Heart right ventricle (tissue), 16 donors: ENCODE measurements at regions of chr6 and their contacts with region 1.

Region 1: DNA sequence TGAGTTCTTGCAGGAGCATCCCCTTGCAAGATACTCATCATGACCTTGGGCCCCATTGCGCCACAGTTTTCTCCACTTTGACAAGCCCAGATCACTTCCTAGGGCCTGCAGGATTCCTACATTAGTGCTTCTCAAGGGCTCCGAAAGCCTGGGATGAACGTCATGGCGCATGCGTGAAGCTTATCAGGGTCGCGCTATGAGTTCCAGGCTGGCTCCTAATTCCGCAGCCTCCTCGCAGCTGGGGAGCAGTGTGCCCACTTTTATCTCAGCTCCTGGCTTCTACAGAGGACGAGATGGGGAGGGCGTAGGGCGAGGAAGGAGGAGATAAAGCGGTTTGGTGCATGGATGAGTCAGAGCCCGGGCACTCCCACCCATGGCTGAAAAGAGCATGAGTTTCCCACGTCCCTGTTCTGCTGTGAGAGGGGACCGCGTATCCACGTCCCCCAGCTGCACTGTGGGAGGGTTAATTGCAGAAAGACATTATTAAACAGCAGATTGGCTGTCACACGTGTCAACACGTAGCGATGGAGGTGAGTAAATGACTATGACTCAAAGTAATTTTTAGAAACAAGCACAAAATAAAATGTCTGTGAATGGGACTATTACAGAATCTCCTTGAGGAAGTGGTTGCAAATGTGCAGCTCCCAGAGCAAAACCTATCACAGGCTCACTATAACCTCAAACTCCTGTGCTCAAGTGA is 72.9 kb upstream of the DSP start:
- DNase-seq: peak; percentile 66 to 67
- ATAC-seq: peak; percentile 78 to 97 (median 93)
- H3K4me3 ChIP-seq: peak overlapping the region in 9 of 10 donors; percentile 9 to 50 (median 38)
- H3K27ac ChIP-seq: peak overlapping the region in 9 of 10 donors; percentile 48 to 76 (median 71)
- H3K4me1 ChIP-seq: peaks cover 0 to 33% (median 18%) of the 10 kb centered on the region in 9 donors
- H3K27me3 ChIP-seq: no peaks in the 10 kb centered on the region
- CTCF ChIP-seq: peak in 2 of 9 donors; percentile 27 to 29

Region 2: DNA sequence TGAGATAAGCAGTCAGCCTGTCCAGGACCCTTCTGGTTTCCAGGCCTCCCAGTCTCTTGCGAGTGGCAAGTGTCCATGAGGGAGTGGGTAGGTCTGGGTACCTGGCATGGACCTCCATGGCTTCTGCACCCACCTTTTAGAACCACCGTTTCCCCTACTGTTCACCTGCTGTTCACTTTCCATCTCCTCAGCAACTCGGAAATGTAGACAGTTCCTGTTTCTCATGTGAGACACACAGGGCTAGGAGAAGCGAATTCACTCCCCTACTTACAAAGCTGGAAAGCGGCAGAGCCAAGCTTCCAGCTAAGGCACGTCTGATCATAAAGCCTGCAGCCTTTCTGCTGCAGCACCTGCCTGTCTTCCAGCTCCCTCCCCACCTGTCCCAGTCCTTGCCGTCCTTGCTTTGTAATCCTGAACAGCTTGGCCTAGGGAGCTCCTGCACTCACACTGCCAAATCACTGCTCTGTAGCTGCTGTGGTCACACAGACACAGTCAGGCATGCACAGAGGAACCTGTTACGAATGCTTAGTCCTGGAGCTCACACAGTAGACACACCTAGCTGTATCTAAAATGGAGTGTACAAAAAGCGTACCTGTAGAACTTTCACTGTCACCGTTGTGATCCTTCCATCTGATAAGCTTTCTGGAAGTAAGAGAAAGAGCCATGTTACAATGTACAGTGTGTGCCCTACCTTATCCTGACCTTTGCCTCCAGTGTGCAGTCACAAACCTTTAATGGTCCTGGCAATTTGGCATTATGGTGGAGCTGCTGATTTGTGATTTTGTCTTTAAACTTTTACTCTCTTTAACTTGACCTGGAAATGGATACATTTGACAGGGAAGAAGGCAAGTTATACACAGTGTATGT is 1756.0 kb before region 1 on chr6:
- intact Hi-C with region 1: no loop called
- DNase-seq: no peak
- ATAC-seq: no peak
- H3K4me3 ChIP-seq: no peak overlapping the region
- H3K27ac ChIP-seq: no peak overlapping the region
- H3K4me1 ChIP-seq: no peaks in the 10 kb centered on the region
- H3K27me3 ChIP-seq: no peaks in the 10 kb centered on the region
- CTCF ChIP-seq: no peak

Region 3: DNA sequence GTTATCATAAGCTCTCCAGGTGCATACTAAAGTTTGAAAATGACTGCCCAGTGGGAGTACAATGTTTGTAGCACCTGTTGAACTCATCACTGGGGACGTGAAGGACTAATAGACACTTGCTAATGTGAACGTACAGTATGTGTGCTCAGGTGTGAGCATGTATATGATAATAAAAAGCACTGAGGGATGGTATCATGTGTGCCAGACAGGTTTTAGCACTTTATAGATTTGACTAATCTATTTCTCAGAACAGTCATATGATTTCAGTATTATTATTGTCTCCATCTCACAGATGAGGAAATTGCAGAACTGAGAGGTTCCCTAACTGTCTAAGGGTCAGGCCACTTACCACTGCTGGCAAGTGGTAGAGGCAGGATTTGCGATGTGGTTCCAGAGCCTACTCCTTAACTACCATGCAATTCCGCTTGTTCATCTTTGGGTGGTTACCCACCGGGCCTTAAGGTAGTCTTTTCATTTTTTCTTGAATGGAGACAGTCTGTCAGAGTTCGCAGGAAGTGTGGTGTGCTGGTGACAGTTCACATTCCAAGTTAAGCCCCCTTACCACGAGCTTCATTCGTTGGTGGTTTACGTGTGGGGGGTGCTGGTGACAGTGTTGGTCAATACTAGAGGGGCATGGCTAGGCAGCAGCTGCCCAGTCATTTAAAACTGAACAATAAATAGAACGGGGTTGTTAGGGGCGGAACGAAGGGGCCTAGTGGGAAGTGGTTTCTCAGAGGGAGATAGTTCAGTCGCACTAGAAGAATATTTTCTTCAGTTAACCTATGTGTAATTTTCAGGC is 314.0 kb before region 1 on chr6:
- intact Hi-C with region 1: no loop called
- DNase-seq: no peak
- ATAC-seq: no peak
- H3K4me3 ChIP-seq: no peak overlapping the region
- H3K27ac ChIP-seq: peak overlapping the region in 2 of 10 donors; percentile 8 to 77
- H3K4me1 ChIP-seq: peaks cover 5 to 94% (median 72%) of the 10 kb centered on the region in 9 donors
- H3K27me3 ChIP-seq: no peaks in the 10 kb centered on the region
- CTCF ChIP-seq: no peak

Region 4: GRCh38 chr6:7418238-7418927 is 50.1 kb before region 1 on chr6:
- intact Hi-C with region 1: no loop called
- DNase-seq: no peak
- ATAC-seq: no peak
- H3K4me3 ChIP-seq: no peak overlapping the region
- H3K27ac ChIP-seq: no peak overlapping the region
- H3K4me1 ChIP-seq: peaks cover 0 to under 1% (median 0%) of the 10 kb centered on the region in 9 donors
- H3K27me3 ChIP-seq: no peaks in the 10 kb centered on the region
- CTCF ChIP-seq: no peak

Region 5: GRCh38 chr6:7532230-7532629 is 63.7 kb after region 1 on chr6:
- intact Hi-C with region 1: loop called in 2 of 10 experiments (anchors 5 to 10 kb)
- DNase-seq: no peak
- ATAC-seq: no peak
- H3K4me3 ChIP-seq: no peak overlapping the region
- H3K27ac ChIP-seq: no peak overlapping the region
- H3K4me1 ChIP-seq: peaks cover 0 to 12% (median 0%) of the 10 kb centered on the region in 9 donors
- H3K27me3 ChIP-seq: peaks cover 0 to 49% (median 17%) of the 10 kb centered on the region in 7 donors
- CTCF ChIP-seq: no peak

Region 6: DNA sequence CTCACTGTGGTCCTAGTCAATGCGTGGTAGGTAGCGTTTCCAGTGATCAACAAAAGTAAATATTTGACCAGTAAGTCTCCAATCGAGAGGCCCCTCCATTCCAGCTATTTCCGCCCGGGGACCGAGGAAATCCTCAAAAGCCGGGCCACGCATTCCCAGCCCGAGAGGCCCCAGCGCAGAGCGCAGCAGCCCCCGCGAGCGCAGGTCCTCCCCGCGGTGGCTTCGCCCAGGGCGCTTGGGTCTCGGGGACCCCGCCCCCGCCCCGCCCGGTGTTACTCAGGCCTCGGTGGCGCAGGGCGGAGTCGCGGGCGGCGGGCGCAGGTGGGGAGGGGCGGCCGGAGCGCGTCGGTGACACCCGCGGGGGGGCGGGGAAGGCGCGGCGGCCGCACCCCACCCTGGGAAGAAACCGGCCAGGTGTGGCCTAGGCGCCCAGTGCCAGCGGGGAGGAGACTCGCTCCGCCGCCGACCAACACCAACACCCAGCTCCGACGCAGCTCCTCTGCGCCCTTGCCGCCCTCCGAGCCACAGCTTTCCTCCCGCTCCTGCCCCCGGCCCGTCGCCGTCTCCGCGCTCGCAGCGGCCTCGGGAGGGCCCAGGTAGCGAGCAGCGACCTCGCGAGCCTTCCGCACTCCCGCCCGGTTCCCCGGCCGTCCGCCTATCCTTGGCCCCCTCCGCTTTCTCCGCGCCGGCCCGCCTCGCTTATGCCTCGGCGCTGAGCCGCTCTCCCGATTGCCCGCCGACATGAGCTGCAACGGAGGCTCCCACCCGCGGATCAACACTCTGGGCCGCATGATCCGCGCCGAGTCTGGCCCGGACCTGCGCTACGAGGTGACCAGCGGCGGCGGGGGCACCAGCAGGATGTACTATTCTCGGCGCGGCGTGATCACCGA is 72.9 kb after region 1 on chr6 and contains the start of gene DSP:
- intact Hi-C with region 1: loop called in 4 of 10 experiments (anchors 2 to 10 kb)
- DNase-seq: peak; percentile 63 to 76
- ATAC-seq: peak; percentile 62 to 88 (median 74)
- H3K4me3 ChIP-seq: peak within 1 kb of the TSS; percentile 53 to 73 (median 66)
- H3K27ac ChIP-seq: peak within 1 kb of the TSS; percentile 84 to 93 (median 90)
- H3K4me1 ChIP-seq: peaks cover 0 to 29% (median 15%) of the 10 kb centered on the region in 9 donors
- H3K27me3 ChIP-seq: peaks cover 0 to 100% (median 58%) of the 10 kb centered on the region in 7 donors
- CTCF ChIP-seq: no peak
- total RNA-seq, gene DSP: 273 to 471 (median 379) TPM

Region 7: DNA sequence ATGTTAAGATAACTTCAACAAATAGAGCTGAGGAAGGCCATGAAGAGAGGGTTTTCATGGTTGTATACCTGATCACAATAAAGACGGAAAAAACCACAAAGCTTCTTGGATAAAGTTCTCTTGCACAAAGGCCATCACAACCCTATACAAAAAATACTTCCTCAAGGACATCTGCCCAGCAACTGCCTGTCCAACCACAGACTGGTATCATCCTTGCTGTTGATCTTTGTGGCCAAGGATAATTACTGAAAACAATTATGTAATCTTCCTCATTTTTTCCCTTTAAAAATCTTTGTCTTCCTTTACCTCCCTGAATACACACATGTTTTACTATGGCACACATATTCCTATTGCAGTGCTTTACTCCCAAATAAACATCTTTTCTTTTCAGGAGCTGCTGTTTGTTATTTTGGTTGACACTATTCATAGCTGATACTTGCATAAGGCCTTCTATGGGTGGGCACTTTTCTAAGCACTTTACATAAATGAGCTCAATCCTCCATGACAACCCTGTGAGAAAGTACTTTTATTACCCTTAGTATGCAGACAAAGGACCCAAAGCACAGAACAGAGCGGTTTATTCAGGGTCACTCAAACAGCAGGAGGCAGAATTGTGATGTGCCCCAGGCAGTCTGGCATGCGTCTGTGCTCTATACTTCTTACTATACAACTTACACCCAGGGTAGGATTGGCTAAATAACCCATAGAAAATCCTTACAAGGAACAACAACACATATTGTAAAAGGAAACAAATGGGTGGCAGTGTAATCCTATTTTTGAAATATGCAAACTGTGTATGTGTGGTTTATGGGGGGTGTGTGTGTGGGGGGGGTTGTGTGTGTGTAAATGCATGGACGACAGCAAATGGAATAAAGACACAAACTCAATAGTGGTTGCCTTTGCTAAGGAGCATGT is 156.5 kb after region 1 on chr6:
- intact Hi-C with region 1: no loop called
- DNase-seq: no peak
- ATAC-seq: no peak
- H3K4me3 ChIP-seq: no peak overlapping the region
- H3K27ac ChIP-seq: no peak overlapping the region
- H3K4me1 ChIP-seq: no peaks in the 10 kb centered on the region
- H3K27me3 ChIP-seq: no peaks in the 10 kb centered on the region
- CTCF ChIP-seq: no peak